SK-N-SH (cell line): ENCODE measurements at regions of chr2 and their contacts with region 1.

Region 1: GRCh38 chr2:181904022-181904632 is 12.6 kb downstream of the ITPRID2 start:
- DNase-seq: peak; percentile 34
- H3K4me3 ChIP-seq: no peak overlapping the region; a peak in 1 of 4 replicates
- H3K27ac ChIP-seq: peak overlapping the region; percentile 14; a peak in 1 of 4 replicates
- H3K4me1 ChIP-seq: peaks cover 0 to 3% of the 10 kb centered on the region in 2 experiments; a peak in 2 of 4 replicates
- H3K27me3 ChIP-seq: no peaks in the 10 kb centered on the region
- CTCF ChIP-seq: peak; percentile 78
- EP300 ChIP-seq: no peak
- RAD21 ChIP-seq: peak; percentile 70

Region 2: GRCh38 chr2:181552808-181553207 is 351.3 kb before region 1 on chr2:
- CTCF ChIA-PET with region 1: no interaction called
- POLR2A ChIA-PET with region 1: no interaction called
- DNase-seq: no peak
- H3K4me3 ChIP-seq: no peak overlapping the region
- H3K27ac ChIP-seq: peak overlapping the region; percentile 30 to 58; a peak in 2 of 4 replicates
- H3K4me1 ChIP-seq: peaks cover 0 to 5% of the 10 kb centered on the region in 2 experiments; a peak in 2 of 4 replicates
- H3K27me3 ChIP-seq: no peaks in the 10 kb centered on the region
- CTCF ChIP-seq: no peak
- EP300 ChIP-seq: no peak
- RAD21 ChIP-seq: no peak

Region 3: GRCh38 chr2:181742922-181743722 is 161.0 kb before region 1 on chr2:
- CTCF ChIA-PET with region 1: interaction called, 20 read pairs
- POLR2A ChIA-PET with region 1: no interaction called
- DNase-seq: peak; percentile 35
- H3K4me3 ChIP-seq: no peak overlapping the region; a peak in 1 of 4 replicates
- H3K27ac ChIP-seq: peak overlapping the region in 1 of 2 experiments; percentile 62; a peak in 3 of 4 replicates
- H3K4me1 ChIP-seq: peaks cover 8 to 19% of the 10 kb centered on the region in 2 experiments; a peak in 2 of 4 replicates
- H3K27me3 ChIP-seq: no peaks in the 10 kb centered on the region
- CTCF ChIP-seq: peak; percentile 83
- EP300 ChIP-seq: 0 out of 4 replicates have a peak, but pooled peaks of 1 of the 2 experiments have one; percentile 2
- RAD21 ChIP-seq: peak; percentile 87

Region 4: DNA sequence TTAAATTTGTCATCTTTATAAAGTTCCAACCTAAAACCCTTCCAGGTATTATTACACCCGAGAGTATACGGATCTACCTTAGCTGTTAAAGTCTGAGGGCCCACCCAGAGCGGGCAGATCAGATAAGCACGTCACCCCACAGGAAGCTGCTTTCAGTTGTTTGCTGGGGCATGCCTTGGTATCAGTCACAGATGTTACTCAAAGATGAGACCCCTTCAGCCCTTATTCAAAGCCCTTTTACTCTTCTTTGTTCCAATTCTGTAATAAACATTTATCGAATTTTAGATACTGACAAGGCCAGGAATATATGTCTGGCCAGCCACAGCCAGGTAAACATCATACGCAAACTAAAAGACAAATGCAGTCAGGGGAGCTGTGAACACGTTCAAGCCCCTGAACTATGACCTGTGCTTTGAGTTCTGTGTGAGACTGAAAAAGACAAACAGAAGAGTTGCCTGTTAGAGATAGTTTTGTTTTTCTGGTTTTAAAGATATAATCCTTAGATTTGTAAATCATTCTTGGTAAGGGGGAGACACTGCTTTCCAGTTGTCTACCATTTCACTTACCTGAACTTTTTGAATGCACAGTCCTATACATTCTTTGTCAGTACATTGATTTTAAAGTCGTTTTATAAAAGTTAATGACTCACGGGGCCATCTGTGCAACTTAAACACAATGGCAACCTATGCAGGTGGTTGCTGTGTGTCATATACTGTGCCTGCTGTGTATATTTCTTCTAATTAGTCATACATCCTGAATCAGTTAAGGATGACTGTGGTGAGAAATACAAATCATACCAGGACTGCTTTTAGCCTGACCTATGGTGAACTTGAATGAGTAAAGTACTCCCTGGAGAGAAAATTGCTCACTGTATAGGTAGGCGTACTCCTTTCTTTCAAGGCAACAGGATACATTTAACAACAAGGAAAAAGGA is 113.1 kb before region 1 on chr2:
- CTCF ChIA-PET with region 1: no interaction called
- POLR2A ChIA-PET with region 1: no interaction called
- DNase-seq: no peak
- H3K4me3 ChIP-seq: no peak overlapping the region
- H3K27ac ChIP-seq: peak overlapping the region; percentile 5 to 84; a peak in 3 of 4 replicates
- H3K4me1 ChIP-seq: peaks cover 0 to 32% of the 10 kb centered on the region in 2 experiments; a peak in 2 of 4 replicates
- H3K27me3 ChIP-seq: no peaks in the 10 kb centered on the region
- CTCF ChIP-seq: no peak
- EP300 ChIP-seq: peak in 1 of 2 experiments; percentile 99; a peak in 3 of 4 replicates
- RAD21 ChIP-seq: no peak

Region 5: GRCh38 chr2:181872178-181872577 is 31.9 kb before region 1 on chr2:
- CTCF ChIA-PET with region 1: no interaction called
- POLR2A ChIA-PET with region 1: no interaction called
- DNase-seq: no peak
- H3K4me3 ChIP-seq: no peak overlapping the region
- H3K27ac ChIP-seq: no peak overlapping the region
- H3K4me1 ChIP-seq: no peaks in the 10 kb centered on the region; a peak in 1 of 4 replicates
- H3K27me3 ChIP-seq: no peaks in the 10 kb centered on the region
- CTCF ChIP-seq: no peak
- EP300 ChIP-seq: no peak
- RAD21 ChIP-seq: no peak

Region 6: GRCh38 chr2:181891258-181891965 is 12.7 kb before region 1 on chr2 and contains the start of gene ITPRID2:
- CTCF ChIA-PET with region 1: interaction called, 14 read pairs
- POLR2A ChIA-PET with region 1: no interaction called
- DNase-seq: peak; percentile 98
- H3K4me3 ChIP-seq: peak within 1 kb of the TSS; percentile 79 to 93
- H3K27ac ChIP-seq: peak within 1 kb of the TSS; percentile 82 to 96
- H3K4me1 ChIP-seq: peaks cover 5 to 10% of the 10 kb centered on the region in 2 experiments; a peak in 2 of 4 replicates
- H3K27me3 ChIP-seq: no peaks in the 10 kb centered on the region
- CTCF ChIP-seq: no peak
- EP300 ChIP-seq: no peak
- RAD21 ChIP-seq: no peak
- polyA plus RNA-seq, gene ITPRID2: 41.9 and 53.1 TPM in 2 replicates

Region 7: DNA sequence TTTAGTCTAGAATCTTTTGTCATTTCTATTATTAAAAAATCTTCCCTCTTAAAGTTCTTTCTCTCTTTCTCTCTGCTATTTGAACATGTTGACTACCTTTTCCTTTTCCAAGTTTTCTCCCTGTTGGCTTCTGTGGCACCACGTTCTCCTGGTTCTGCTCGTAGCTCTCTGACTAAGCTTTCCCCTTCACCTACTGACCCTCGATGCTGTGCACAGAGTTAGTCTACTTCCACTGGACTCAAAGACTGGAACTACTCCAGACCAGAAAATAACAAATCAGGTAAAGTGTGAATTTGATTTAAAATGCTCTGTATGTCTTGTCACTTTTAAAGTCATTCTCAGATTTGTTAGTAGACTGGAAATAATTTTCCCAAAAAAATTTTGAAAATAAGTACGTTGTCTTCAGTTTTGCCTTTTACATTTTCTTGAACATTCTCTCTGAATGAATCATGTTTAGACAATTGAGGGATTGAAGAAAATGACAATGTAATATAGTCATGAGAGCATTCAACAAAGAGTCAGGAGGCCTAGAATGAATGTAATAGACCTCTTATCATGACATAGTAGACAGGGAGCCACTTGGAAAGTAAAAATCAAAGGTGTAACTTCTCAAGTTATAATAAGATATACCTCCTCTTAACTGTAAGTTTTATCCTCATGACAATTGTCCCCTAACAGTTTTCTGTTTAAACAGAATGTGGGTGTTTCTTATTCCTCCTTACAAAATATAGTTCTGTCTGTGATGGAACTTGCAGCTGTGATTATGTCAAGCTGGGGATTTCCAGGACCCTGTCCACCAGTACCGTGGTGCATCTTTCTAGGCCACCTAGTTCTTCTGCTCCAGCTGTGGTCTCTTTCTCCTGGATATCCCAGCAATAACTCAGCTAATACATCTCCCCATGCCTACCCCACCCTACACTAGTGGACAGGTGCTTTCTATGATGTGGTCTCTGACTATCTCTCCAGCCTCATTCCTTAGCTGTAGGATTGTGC is 12.9 kb after region 1 on chr2:
- CTCF ChIA-PET with region 1: interaction called, 10 read pairs
- POLR2A ChIA-PET with region 1: no interaction called
- DNase-seq: no peak
- H3K4me3 ChIP-seq: no peak overlapping the region
- H3K27ac ChIP-seq: peak overlapping the region in 1 of 2 experiments; percentile 55; a peak in 2 of 4 replicates
- H3K4me1 ChIP-seq: peaks cover 0 to 3% of the 10 kb centered on the region in 2 experiments; a peak in 1 of 4 replicates
- H3K27me3 ChIP-seq: no peaks in the 10 kb centered on the region
- CTCF ChIP-seq: no peak
- EP300 ChIP-seq: no peak
- RAD21 ChIP-seq: no peak